Heart left ventricle (tissue), 16 donors: ENCODE measurements at regions of chr5 and their contacts with region 1.

Region 1: GRCh38 chr5:72507909-72508575 is 832 bp upstream of the ZNF366 start:
- DNase-seq: no peak
- ATAC-seq: no peak
- H3K4me3 ChIP-seq: peak overlapping the region in 10 of 12 donors; percentile 21 to 58 (median 44)
- H3K27ac ChIP-seq: peak overlapping the region; percentile 51 to 84 (median 72)
- H3K4me1 ChIP-seq: peaks cover 5 to 79% (median 31%) of the 10 kb centered on the region in 12 donors
- H3K27me3 ChIP-seq: no peaks in the 10 kb centered on the region
- CTCF ChIP-seq: no peak
- POLR2A ChIP-seq: no peak

Region 2: GRCh38 chr5:72133212-72133990 is 374.6 kb before region 1 on chr5:
- intact Hi-C with region 1: no loop called
- DNase-seq: no peak
- ATAC-seq: no peak
- H3K4me3 ChIP-seq: no peak overlapping the region
- H3K27ac ChIP-seq: peak overlapping the region in 2 of 12 donors; percentile 11 to 42
- H3K4me1 ChIP-seq: peaks cover 0 to 79% (median 22%) of the 10 kb centered on the region in 12 donors
- H3K27me3 ChIP-seq: no peaks in the 10 kb centered on the region
- CTCF ChIP-seq: no peak
- POLR2A ChIP-seq: no peak

Region 3: DNA sequence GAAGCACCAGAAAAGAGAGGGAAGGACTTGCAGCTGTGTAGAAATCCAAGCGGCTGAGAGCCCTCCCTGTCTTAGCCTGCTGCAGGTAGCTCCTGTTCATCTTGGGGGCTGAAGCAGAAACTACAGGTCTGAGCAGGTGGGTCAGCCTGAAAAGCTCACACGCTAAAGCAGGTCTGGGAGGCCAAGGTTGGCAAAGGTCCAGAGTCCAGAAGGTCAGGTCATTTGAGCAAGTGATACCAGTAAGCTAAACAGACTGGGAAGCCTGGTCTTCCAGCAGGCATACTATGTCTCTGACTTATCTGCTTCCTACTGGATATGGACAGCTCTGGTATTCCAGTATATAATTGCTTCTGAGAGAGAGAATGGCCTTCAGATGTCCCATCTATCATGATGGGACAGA is 161.6 kb before region 1 on chr5:
- intact Hi-C with region 1: no loop called
- DNase-seq: no peak
- ATAC-seq: no peak
- H3K4me3 ChIP-seq: no peak overlapping the region
- H3K27ac ChIP-seq: no peak overlapping the region
- H3K4me1 ChIP-seq: peaks cover 0 to 9% (median 0%) of the 10 kb centered on the region in 12 donors
- H3K27me3 ChIP-seq: no peaks in the 10 kb centered on the region
- CTCF ChIP-seq: no peak
- POLR2A ChIP-seq: no peak

Region 4: DNA sequence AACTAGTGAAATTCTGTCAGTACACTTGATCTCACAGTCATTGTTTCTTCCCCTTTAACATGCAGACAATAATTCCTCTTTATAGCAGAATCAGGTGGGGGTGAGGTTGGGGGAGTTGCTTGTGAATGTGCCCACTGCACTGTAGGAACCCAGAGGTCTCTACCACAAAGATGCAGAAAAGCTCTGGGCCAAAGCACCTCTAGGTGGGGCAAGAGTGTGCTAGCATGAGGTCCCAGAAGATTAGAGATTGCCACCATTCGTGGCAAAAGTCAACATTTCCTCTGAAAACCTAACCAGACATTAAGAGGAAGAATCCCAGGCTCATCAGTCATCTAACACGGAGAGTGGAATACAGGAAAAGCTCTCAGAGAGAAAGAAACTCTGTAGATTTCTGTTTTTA is 113.4 kb before region 1 on chr5:
- intact Hi-C with region 1: loop called in 1 of 10 experiments (anchors 10 kb)
- DNase-seq: no peak
- ATAC-seq: peak in 2 of 4 donors; percentile 18 to 21
- H3K4me3 ChIP-seq: no peak overlapping the region
- H3K27ac ChIP-seq: no peak overlapping the region
- H3K4me1 ChIP-seq: peaks cover 0 to 56% (median 18%) of the 10 kb centered on the region in 12 donors
- H3K27me3 ChIP-seq: no peaks in the 10 kb centered on the region
- CTCF ChIP-seq: peak in 10 of 12 donors; percentile 14 to 52 (median 31)
- POLR2A ChIP-seq: no peak

Region 5: DNA sequence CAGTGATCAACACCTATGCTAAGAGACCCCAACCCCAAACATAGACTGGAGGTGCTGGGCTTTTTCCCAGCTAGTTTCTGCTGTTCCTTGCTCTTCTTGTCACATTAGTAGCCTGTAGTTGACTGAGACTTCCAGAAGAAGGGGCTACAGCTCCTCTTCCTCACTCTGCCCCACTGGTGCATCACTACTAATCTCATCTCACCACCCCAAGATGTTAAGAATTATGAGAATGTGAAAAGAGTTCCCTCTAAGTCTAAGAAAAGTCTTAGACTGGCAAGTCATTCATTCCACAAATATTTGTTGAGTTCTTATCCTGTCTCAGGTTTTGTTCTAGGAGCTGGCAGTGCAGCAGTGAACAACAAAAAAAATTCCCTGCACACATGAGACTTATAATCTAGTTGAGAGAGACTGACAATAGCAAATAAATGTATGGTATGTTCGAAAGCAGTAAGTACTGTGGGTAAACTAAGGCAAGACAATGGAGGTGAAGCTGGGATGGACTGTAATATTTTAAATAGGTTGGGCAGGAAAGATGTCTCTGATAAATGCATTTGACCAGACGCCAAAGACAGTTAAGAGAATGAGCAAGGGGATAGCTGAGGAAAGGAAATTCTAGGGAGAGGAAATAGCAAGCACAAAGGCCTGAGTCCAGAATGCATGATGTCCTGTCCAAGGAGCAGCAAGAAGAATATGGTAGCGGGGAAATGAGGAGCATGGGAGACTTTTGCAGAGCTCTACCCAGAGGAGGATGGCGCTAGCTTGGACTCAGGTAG is 95.6 kb before region 1 on chr5:
- intact Hi-C with region 1: no loop called
- DNase-seq: no peak
- ATAC-seq: no peak
- H3K4me3 ChIP-seq: no peak overlapping the region
- H3K27ac ChIP-seq: no peak overlapping the region
- H3K4me1 ChIP-seq: peaks cover 0 to 13% (median 0%) of the 10 kb centered on the region in 12 donors
- H3K27me3 ChIP-seq: no peaks in the 10 kb centered on the region
- CTCF ChIP-seq: no peak
- POLR2A ChIP-seq: no peak

Region 6: GRCh38 chr5:72441861-72442540 is 66.0 kb before region 1 on chr5:
- intact Hi-C with region 1: loop called in 1 of 10 experiments (anchors 10 kb)
- DNase-seq: no peak
- ATAC-seq: peak in 1 of 4 donors; percentile 24
- H3K4me3 ChIP-seq: no peak overlapping the region
- H3K27ac ChIP-seq: peak overlapping the region in 4 of 12 donors; percentile 10 to 38 (median 26)
- H3K4me1 ChIP-seq: peaks cover 0 to 54% (median 26%) of the 10 kb centered on the region in 12 donors
- H3K27me3 ChIP-seq: no peaks in the 10 kb centered on the region
- CTCF ChIP-seq: no peak
- POLR2A ChIP-seq: no peak

Region 7: GRCh38 chr5:72459089-72459661 is 48.9 kb before region 1 on chr5:
- intact Hi-C with region 1: loop called in 3 of 10 experiments (anchors 5 to 10 kb)
- DNase-seq: no peak
- ATAC-seq: no peak
- H3K4me3 ChIP-seq: no peak overlapping the region
- H3K27ac ChIP-seq: peak overlapping the region in 3 of 12 donors; percentile 3 to 47 (median 36)
- H3K4me1 ChIP-seq: peaks cover 5 to 61% (median 44%) of the 10 kb centered on the region in 12 donors
- H3K27me3 ChIP-seq: no peaks in the 10 kb centered on the region
- CTCF ChIP-seq: no peak
- POLR2A ChIP-seq: no peak

Region 8: DNA sequence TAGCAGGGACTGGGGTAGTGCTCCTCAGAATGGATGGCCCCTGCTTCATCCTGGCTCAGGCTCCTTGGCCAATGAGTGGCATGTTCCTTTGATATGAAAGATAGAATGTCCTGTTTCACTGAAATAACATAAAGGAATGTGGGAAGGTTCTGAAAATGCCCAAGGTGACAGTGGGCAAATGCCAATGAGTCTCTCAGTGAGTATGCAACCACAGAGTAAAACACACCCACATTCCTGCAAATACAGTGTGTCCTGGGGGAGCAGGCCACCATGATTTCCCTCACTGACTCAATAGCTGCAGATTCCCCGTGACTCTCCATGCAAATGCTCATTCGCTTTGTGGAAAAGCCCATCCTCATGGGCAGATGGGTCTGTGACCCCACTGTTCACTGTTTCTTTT is 37.2 kb before region 1 on chr5:
- intact Hi-C with region 1: loop called in 1 of 10 experiments (anchors 5 kb)
- DNase-seq: no peak
- ATAC-seq: no peak
- H3K4me3 ChIP-seq: no peak overlapping the region
- H3K27ac ChIP-seq: no peak overlapping the region
- H3K4me1 ChIP-seq: peaks cover 0 to 72% (median 22%) of the 10 kb centered on the region in 12 donors
- H3K27me3 ChIP-seq: no peaks in the 10 kb centered on the region
- CTCF ChIP-seq: no peak
- POLR2A ChIP-seq: no peak

Region 9: DNA sequence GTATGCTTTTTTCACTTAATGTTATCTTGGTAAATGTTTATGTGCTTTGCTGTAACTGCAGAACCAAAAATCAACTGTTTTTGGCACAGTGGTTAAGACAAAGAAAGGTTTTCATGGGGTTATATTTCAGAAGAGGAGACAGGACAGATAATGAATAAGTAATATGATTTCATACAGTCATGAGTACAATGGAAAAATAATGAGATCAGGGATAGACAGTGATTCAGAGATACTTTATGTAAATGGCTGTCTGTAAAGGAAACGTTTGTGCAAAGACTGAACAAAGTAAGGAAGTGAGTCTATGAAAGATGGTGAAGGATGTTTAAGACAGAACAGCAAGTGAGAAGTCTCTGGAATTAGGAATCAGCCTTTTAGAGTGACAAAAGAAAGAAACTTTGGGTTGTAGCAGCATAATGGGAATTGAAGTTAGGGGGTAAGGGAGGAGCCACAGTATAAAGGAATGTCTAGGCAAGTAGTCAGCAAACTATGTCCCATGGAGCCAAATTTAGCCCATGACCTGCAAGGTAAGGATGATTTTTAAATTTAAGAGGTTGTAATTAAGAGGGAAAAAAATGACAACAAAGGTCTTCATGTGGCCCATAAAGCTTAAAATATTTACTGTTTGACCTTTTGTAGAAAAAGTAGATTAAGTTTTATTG is 363.5 kb after region 1 on chr5:
- intact Hi-C with region 1: no loop called
- DNase-seq: no peak
- ATAC-seq: peak in 2 of 4 donors; percentile 32 to 43
- H3K4me3 ChIP-seq: no peak overlapping the region
- H3K27ac ChIP-seq: peak overlapping the region in 2 of 12 donors; percentile 4 to 15
- H3K4me1 ChIP-seq: peaks cover 0 to 22% (median 6%) of the 10 kb centered on the region in 12 donors
- H3K27me3 ChIP-seq: no peaks in the 10 kb centered on the region
- CTCF ChIP-seq: no peak
- POLR2A ChIP-seq: no peak